Adrenal gland (tissue), 19 donors: ENCODE measurements at regions of chr14 and their contacts with region 1.

Region 1: DNA sequence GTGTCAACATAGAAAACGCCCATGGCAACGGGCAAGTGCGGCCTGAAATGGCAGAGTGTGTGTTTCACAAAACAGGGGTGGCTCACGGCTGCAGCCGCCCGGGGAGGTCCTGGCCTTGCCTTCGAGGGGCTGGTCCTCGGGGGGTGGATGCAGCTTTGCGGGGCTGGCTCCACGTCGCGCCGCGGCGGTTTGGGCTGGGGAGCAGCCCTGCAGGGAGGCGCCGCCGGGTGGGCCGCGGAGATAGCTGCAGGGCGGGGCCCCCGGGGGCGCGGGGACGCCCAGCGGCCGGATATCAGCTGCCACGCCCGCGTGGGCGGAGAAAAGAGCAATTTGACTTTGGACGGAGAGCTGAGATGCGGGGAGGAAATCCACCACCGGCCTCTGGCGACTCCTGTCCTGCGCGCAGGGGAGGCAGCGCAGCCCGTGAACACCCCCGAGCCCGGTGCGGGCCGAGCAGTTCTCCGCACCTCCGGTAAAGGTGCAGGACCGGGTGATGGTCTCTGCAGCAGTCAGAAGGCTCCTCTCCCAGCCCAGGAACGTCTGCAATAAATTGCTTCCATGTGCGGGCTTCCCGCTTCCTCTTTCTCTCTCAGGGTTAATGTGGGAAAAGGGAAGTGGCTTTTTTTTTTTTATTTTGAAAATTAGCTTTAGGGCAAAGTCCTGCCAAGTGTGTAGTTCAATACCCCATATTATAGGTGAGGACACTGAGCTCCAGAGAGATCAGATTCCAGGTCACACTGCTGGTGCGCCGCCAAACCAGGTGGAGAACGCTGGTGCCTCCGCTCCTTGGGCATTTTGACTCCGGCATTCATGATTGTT is 110.5 kb downstream of the ARF6 start:
- DNase-seq: peak; percentile 75 to 87 (median 82)
- H3K4me3 ChIP-seq: peak overlapping the region in 2 of 4 donors; percentile 37 to 67
- H3K27ac ChIP-seq: peak overlapping the region; percentile 66 to 86 (median 81)
- H3K4me1 ChIP-seq: peaks cover 25 to 44% of the 10 kb centered on the region in 2 donors
- H3K27me3 ChIP-seq: no peaks in the 10 kb centered on the region
- CTCF ChIP-seq: peak in 4 of 6 experiments; percentile 5 to 35 (median 32)
- POLR2A ChIP-seq: peak; percentile 49 to 79

Region 2: DNA sequence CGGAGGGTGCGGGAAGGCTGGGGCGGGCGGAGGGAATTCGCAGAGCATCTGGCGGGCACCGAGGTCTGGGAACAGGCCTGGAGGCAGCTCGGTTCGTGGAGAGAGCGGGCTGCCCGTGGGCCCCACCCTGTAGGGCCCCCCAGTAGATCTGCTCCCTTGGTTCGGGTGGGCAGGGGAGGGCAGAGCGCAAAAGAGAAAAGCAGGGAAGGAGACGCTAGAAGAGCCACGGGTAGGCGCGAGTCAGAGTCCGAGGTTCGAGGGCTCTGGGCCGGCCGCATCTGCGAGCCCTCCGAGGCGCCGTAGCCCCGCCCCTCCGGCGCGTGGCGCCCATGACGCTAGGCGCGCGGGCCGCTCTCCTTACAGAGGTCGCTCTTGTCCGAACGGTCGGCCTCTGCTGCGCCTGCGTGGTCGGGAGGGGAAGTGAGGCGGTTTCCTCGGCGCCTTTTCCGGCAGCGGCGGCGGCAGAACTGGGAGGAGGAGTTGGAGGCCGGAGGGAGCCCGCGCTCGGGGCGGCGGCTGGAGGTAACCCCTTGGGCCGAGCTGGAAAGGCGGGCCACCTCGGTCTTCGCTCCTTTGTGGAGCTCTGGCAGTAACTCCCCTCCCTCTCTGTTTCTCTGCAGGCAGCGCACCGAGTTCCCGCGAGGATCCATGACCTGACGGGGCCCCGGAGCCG is 110.7 kb before region 1 on chr14 and contains the start of gene ARF6:
- intact Hi-C with region 1: loop called (anchors 10 kb)
- DNase-seq: peak; percentile 98 to 99 (median 99)
- H3K4me3 ChIP-seq: peak within 1 kb of the TSS; percentile 75 to 95 (median 86)
- H3K27ac ChIP-seq: peak within 1 kb of the TSS; percentile 95 to 100 (median 99)
- H3K4me1 ChIP-seq: peaks cover 30 to 40% of the 10 kb centered on the region in 2 donors
- H3K27me3 ChIP-seq: no peaks in the 10 kb centered on the region
- CTCF ChIP-seq: peak in 3 of 6 experiments; percentile 5 to 16 (median 12)
- POLR2A ChIP-seq: peak; percentile 85 to 97
- total RNA-seq, gene ARF6: 26.4 to 65.8 (median 49.6) TPM

Region 3: DNA sequence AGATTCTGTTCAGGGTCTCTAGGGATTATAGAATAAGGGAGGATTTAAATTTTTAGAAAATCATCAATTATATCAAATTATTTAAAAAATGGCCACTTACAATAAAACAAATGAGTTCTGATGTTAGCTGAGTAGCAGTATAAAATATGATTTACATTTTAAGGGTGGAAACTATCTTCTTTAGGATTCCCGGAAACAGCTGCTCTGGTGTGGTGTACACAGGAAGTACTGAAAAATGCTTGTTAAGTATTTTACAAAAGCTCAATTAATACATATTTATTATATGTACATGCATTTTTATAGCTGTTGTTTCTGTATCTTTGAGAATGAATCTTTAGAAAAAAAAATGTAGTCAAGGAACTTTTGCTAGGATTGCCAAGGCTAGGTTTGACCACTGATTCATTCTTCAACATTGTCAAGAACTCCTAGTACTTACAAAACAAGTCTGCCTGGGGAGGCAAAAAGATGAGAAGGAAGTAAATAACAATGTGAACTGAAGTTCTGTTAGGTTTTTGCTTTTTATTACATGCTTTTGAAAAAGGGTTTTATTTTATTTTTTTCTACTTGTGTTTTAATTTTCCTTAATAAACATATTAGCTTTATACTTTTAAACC is 62.5 kb before region 1 on chr14:
- intact Hi-C with region 1: no loop called
- DNase-seq: no peak
- H3K4me3 ChIP-seq: no peak overlapping the region
- H3K27ac ChIP-seq: peak overlapping the region in 1 of 5 donors; percentile 8
- H3K4me1 ChIP-seq: no peaks in the 10 kb centered on the region
- H3K27me3 ChIP-seq: no peaks in the 10 kb centered on the region
- CTCF ChIP-seq: no peak
- POLR2A ChIP-seq: no peak

Region 4: DNA sequence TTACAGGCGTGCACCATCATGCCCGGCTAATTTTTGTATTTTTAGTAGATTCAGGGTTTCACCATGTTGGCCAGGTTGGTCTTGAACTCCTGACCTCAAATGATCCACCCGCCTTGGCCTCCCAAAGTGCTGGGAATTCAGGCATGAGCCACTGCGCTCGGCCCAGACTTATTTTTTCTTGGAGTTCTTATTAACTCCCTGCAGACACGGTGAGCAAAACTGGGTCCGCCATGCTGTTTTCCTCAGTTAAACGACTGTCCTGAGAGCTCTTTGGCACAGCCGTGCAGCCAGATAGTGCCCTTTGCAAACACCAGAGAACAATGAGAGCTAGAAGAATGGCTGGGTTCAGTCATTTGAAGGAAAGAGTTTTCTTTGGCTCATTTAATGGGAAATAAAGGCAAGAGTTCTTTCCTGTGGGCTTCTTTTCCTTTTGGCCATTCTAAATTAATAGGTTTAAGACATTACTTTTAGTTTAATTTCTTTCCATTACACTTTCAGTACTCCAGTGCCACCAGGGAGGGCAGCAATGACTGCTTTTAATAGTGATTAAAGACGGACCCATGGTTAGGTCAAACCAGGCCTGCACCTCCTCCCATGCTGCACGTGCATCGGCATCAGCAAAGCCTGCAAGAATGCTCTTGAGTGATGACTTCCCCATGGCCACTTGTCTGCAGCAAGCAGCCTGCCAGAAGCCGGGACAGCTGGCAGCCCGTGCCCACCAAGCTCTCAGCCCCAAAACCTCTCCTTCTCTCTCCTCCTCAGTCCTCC is 52.2 kb after region 1 on chr14:
- intact Hi-C with region 1: loop called in 1 of 2 experiments (anchors 5 kb)
- DNase-seq: peak in 5 of 7 donors; percentile 17 to 53 (median 41)
- H3K4me3 ChIP-seq: no peak overlapping the region
- H3K27ac ChIP-seq: no peak overlapping the region
- H3K4me1 ChIP-seq: peaks cover under 1 to 11% of the 10 kb centered on the region in 2 donors
- H3K27me3 ChIP-seq: no peaks in the 10 kb centered on the region
- CTCF ChIP-seq: peak in 5 of 6 experiments; percentile 17 to 32 (median 29)
- POLR2A ChIP-seq: no peak

Region 5: GRCh38 chr14:50667996-50668825 is 664.8 kb after region 1 on chr14 and contains the start of gene SAV1:
- intact Hi-C with region 1: no loop called
- DNase-seq: peak; percentile 75 to 90 (median 84)
- H3K4me3 ChIP-seq: peak within 1 kb of the TSS; percentile 28 to 90 (median 54)
- H3K27ac ChIP-seq: peak within 1 kb of the TSS; percentile 93 to 98 (median 96)
- H3K4me1 ChIP-seq: peaks cover 4 to 27% of the 10 kb centered on the region in 2 donors
- H3K27me3 ChIP-seq: no peaks in the 10 kb centered on the region
- CTCF ChIP-seq: no peak
- POLR2A ChIP-seq: peak; percentile 87 to 97
- total RNA-seq, gene SAV1: 14.8 to 39.2 (median 27.3) TPM